CD14-positive monocyte (primary cell): ENCODE measurements at regions of chr18 and their contacts with region 1.

Region 1: DNA sequence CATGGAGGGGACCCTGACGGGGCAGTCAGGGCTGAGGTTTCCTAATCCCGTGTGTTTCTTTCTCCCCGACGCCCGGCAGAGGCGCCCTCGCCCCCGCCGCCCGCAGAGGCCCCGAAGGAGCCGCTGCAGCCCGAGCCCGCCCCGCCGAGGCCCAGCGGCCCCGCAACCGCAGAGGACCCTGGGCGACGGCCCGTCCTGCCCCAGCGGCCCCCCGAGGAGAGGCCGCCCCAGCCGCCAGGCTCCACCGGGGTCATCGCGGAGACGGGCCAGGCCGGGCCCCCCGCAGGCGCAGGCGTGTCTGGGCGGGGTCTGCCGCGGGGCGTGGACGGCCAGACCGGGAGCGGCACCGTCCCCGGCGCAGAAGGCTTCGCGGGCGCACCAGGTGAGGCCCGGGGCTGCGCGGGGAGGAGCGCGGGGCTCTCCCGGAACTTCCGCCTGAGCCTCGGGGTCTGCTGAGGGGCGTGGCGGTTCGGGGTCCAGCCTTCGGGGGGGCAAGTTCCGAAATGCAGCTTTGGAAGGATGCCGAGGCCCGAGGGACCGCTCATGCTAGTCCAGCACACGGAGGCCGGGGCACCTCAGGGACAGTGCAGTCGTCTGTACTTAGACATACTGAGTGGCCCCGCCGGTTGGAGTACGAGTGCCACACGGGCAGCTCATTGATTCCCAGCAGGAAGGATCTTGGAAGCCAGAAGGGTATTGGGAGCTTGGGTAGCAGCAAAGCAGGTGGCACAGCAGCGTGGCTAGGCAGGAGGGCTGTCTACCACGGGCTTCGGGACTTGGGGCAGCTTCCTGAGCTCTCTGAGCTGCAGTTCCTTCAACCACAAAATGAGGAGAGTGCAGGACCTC is 60.1 kb downstream of the EMILIN2 start:
- DNase-seq: peak in 2 of 3 donors; percentile 9 to 34
- H3K4me3 ChIP-seq: peak overlapping the region; percentile 45 to 80 (median 52)
- H3K4me3 Mint-ChIP-seq: peak overlapping the region; percentile 85 to 87
- H3K27ac ChIP-seq: peak overlapping the region in 1 of 2 donors; percentile 62
- H3K27ac Mint-ChIP-seq: peak overlapping the region in 3 of 7 donors; percentile 42 to 77 (median 57)
- H3K4me1 ChIP-seq: peaks cover 26 to 42% of the 10 kb centered on the region in 2 donors
- H3K4me1 Mint-ChIP-seq: peaks cover 20% of the 10 kb centered on the region
- H3K27me3 ChIP-seq: no peaks in the 10 kb centered on the region
- H3K27me3 Mint-ChIP-seq: no peaks in the 10 kb centered on the region
- CTCF ChIP-seq: peak; percentile 59

Region 2: GRCh38 chr18:2787225-2787624 is 119.7 kb before region 1 on chr18:
- intact Hi-C with region 1: loop called in 1 of 2 experiments (anchors 10 kb)
- DNase-seq: no peak
- H3K4me3 ChIP-seq: no peak overlapping the region
- H3K4me3 Mint-ChIP-seq: no peak overlapping the region
- H3K27ac ChIP-seq: no peak overlapping the region
- H3K27ac Mint-ChIP-seq: peak overlapping the region in 5 of 7 donors; percentile 8 to 39 (median 10)
- H3K4me1 ChIP-seq: no peaks in the 10 kb centered on the region
- H3K4me1 Mint-ChIP-seq: no peaks in the 10 kb centered on the region
- H3K27me3 ChIP-seq: no peaks in the 10 kb centered on the region
- H3K27me3 Mint-ChIP-seq: no peaks in the 10 kb centered on the region
- CTCF ChIP-seq: no peak